Lower leg skin (tissue), 4 donors: ENCODE measurements at regions of chr9 and their contacts with region 1.

Region 1: GRCh38 chr9:101443364-101443771 is 7.8 kb upstream of the ALDOB start:
- DNase-seq: no peak
- H3K4me3 ChIP-seq: no peak overlapping the region
- CTCF ChIP-seq: no peak
- POLR2A ChIP-seq: no peak

Region 2: DNA sequence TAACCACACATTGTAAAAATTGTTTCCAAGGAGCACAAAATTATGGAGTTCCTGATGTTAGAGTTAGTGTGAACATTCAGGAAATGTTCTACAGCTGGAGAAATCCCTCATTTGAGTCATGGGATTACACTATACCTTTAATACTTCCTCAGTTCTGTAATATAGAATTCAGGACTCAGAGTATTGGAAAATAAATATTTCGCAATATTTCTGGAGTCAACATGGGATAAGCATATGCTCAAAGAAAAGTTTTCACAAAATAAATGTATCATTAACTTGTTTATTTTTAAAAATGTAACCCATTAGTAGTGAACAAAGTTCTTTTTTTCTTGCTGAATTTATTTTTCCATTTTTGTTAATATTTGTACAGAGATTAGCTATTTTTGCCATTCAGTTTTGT is 1560.3 kb after region 1 on chr9:
- intact Hi-C with region 1: loop called (anchors 5 kb)
- DNase-seq: no peak
- H3K4me3 ChIP-seq: no peak overlapping the region
- CTCF ChIP-seq: no peak
- POLR2A ChIP-seq: no peak